Calu3 (cell line): ENCODE measurements at regions of chr2 and their contacts with region 1.

Region 1: DNA sequence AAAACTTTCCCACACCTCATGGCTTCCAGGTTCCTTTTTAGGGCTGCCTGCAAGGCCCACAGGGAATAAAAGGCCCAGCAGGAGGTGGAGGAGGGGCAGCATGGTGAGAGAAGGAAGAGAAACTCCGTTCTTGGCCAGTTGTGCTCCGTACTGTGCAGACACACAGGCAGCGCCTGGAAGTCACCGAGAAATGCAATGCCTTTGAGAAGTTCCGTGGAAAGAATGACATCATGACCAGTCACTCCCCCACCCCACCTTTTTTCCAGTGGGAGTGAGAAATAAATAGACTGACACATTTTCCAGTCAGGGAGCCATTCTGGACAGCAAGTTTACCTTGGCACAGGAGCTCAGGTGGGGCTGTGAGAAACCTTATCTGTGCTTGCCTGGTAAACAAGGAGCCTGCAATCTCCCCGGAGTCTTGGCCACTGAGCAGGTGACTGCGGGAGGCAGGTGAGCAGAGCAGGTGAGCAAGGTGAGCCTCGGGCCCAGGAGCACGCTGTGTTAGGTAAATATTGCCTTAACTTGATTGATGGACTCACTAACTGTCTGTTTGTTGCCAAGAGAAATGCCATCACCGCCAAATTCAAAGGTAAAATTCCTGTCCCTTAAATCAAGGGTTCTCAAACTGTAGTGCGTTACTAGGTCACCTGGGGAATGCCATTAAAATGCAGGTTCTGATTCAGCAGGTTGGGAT is 13.5 kb upstream of the LBH start:
- DNase-seq: peak; percentile 72
- H3K4me3 Mint-ChIP-seq: peak overlapping the region; percentile 27
- H3K27ac Mint-ChIP-seq: no peak overlapping the region
- H3K4me1 Mint-ChIP-seq: peaks cover 12% of the 10 kb centered on the region
- H3K27me3 Mint-ChIP-seq: peaks cover 23% of the 10 kb centered on the region
- CTCF ChIP-seq: no peak

Region 2: DNA sequence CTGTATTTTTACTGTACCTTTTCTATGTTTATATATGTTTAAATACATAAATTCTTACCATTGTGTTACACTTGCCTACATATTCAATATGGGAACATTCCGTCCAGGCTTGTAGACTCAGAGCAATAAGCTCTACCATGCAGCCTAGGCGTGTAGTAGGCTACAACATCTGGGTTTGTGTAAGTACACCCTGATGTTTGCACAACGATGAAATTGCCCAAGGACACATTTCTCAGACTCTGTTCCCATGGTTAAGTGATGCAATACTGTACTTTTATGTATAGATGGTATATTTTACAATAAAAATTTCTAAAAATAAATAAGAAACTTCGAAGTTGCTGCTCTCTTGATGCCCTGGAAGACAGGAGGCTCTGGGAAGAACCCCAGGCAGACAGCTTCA is 32.6 kb before region 1 on chr2:
- CTCF ChIA-PET with region 1: no interaction called
- intact Hi-C with region 1: no loop called
- DNase-seq: no peak
- H3K4me3 Mint-ChIP-seq: no peak overlapping the region
- H3K27ac Mint-ChIP-seq: no peak overlapping the region
- H3K4me1 Mint-ChIP-seq: no peaks in the 10 kb centered on the region
- H3K27me3 Mint-ChIP-seq: peaks cover 77% of the 10 kb centered on the region
- CTCF ChIP-seq: no peak

Region 3: GRCh38 chr2:30273261-30273861 is 55.6 kb after region 1 on chr2:
- CTCF ChIA-PET with region 1: no interaction called
- intact Hi-C with region 1: loop called (anchors 5 kb)
- DNase-seq: peak; percentile 54
- H3K4me3 Mint-ChIP-seq: peak overlapping the region; percentile 34
- H3K27ac Mint-ChIP-seq: peak overlapping the region; percentile 68
- H3K4me1 Mint-ChIP-seq: peaks cover 30% of the 10 kb centered on the region
- H3K27me3 Mint-ChIP-seq: no peaks in the 10 kb centered on the region
- CTCF ChIP-seq: no peak

Region 4: GRCh38 chr2:30447149-30448045 is 229.6 kb after region 1 on chr2 and contains the start of gene LCLAT1:
- CTCF ChIA-PET with region 1: no interaction called
- intact Hi-C with region 1: loop called (anchors 10 kb)
- DNase-seq: peak; percentile 84
- H3K4me3 Mint-ChIP-seq: peak within 1 kb of the TSS; percentile 99
- H3K27ac Mint-ChIP-seq: peak within 1 kb of the TSS; percentile 96
- H3K4me1 Mint-ChIP-seq: peaks cover 43% of the 10 kb centered on the region
- H3K27me3 Mint-ChIP-seq: no peaks in the 10 kb centered on the region
- CTCF ChIP-seq: no peak
- total RNA-seq, gene LCLAT1: 45.0 and 47.6 TPM in 2 replicates